ENCODE measurements at regions of chr1 and their contacts with region 1.

Region 1: GRCh38 chr1:29515170-29515955 is 279.0 kb downstream of the PTPRU start:
- DNase-seq: peak; percentile 11

Region 2: GRCh38 chr1:29590583-29591565 is 75.5 kb after region 1 on chr1:
- intact Hi-C with region 1: loop called in 1 of 2 experiments (anchors 2 kb)
- DNase-seq: no peak

Measured in posterior vena cava (tissue), 2 donors.